ENCODE measurements at regions of chr5 and their contacts with region 1.

Region 1: DNA sequence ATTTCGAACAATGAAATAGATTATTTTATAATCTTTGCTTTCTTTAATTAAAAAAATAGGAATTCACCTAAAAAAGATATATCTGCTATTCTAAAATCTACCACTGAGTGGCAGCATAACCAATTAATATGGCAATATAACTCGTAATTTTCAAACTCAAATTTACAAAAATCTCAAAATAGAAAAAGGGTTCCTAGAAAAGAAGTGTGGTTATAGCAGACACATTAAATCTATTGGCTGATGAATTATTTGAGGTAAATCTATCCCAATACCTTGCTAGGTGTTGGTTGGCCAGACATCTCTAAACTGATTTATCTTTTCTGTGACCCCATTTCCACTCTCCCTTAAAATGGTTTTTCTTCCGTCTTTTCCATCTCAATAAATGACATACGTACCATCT is 30.2 kb upstream of the NRG2 start:
- DNase-seq: no peak
- H3K4me3 ChIP-seq: no peak overlapping the region
- CTCF ChIP-seq: no peak

Region 2: DNA sequence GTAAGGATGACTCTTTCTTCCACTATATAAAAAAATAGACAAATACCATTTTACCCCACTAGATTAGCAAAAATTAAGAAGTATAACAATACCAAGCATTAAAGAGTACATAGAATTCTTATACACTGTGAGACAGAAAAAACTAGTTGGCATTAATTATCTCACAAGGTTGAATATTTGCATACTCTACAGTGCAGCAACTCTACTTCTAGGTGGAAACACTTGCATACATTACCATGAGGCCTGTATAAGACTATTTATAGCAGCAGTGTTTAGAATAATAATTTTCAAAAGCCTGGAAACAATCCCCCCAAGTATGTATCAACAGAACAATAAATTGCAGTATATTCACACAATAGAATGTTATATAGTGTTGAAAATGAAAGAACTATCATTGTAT is 21.6 kb after region 1 on chr5:
- CTCF ChIA-PET with region 1: interaction called, 12 read pairs
- POLR2A ChIA-PET with region 1: no interaction called
- DNase-seq: no peak
- H3K4me3 ChIP-seq: no peak overlapping the region
- CTCF ChIP-seq: no peak

Region 3: DNA sequence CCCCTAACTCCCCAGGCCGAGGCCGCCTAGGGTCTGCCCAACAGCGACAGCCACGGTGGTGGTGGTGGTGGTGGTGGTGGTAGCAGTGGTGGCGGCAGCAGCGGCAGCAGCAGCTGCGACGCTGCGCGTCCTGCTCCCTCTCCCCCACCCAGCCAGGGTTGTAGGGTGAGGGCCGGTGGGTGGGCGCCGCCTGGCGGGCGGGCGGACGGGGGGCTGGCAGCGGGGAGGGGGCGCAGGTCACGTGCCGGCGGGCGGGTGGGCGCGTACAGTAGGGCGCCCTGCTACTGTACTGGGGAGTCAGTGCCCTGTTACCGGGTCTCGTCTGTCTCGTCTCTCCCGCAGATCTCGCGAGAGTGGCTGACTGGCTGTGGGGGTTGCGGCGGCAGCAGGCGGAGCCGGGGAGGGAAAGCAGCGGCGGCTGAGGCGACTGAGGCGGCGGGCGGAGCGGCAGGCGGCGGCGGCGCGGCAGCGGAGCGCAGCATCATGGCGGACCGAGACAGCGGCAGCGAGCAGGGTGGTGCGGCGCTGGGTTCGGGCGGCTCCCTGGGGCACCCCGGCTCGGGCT is 40.5 kb after region 1 on chr5 and contains the start of gene PURA:
- CTCF ChIA-PET with region 1: interaction called, 14 read pairs
- POLR2A ChIA-PET with region 1: no interaction called
- DNase-seq: no peak
- H3K4me3 ChIP-seq: peak within 1 kb of the TSS; percentile 74
- CTCF ChIP-seq: no peak

Region 4: DNA sequence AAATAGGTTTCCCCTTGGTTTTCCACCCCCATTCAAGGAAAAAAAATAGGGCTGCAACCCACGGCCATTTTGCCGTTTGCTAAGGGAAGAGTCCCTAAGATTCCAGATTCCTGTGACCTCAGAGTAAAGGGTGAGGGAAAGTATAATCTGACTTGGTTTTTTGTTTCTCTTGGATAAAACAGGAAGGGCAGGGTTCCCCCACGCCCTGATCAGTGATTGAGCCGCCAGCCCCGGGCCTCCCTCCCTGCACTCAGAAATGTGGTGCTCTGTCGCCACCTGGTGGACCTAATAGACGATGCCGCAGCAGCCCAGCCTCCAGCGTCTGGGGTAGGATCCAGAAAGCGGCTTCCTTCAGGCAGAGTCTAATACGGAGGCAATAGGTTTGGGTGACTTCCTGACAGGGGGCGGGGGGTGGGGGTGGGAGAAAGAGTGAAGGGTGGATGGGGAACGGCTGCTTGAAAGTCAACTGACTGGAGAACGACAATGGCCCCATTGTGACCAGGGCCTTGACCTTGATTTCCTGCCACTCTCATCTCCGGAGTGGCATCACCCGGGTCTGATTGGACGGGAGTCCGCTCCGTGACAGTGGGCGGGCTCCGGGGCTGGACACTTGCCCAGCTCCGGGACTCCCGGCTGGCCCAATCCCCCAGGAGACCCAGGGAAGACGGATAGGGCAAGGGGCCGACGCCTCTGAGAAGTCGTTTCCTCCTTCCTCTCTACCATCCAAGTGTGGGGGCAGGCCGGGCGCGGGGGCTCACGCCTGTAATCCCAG is 83.9 kb after region 1 on chr5:
- CTCF ChIA-PET with region 1: interaction called, 288 read pairs
- POLR2A ChIA-PET with region 1: no interaction called
- DNase-seq: no peak
- H3K4me3 ChIP-seq: peak overlapping the region; percentile 38
- CTCF ChIP-seq: peak; percentile 94

Region 5: GRCh38 chr5:140547508-140548299 is 474.4 kb after region 1 on chr5 and contains the start of gene EIF4EBP3:
- CTCF ChIA-PET with region 1: no interaction called
- POLR2A ChIA-PET with region 1: no interaction called
- DNase-seq: peak; percentile 77
- H3K4me3 ChIP-seq: peak within 1 kb of the TSS; percentile 49
- CTCF ChIP-seq: peak; percentile 70